B cell (primary cell): ENCODE measurements at regions of chr2 and their contacts with region 1.

Region 1: GRCh38 chr2:213251618-213252017 is 32.6 kb upstream of the SPAG16 start:
- DNase-seq: peak; percentile 71
- ATAC-seq: peak; percentile 72
- H3K4me3 ChIP-seq: no peak overlapping the region
- H3K4me3 Mint-ChIP-seq: no peak overlapping the region
- H3K27ac ChIP-seq: no peak overlapping the region
- H3K27ac Mint-ChIP-seq: no peak overlapping the region
- H3K4me1 ChIP-seq: no peaks in the 10 kb centered on the region
- H3K4me1 Mint-ChIP-seq: no peaks in the 10 kb centered on the region
- H3K27me3 ChIP-seq: no peaks in the 10 kb centered on the region
- H3K27me3 Mint-ChIP-seq: peaks cover 9% of the 10 kb centered on the region
- CTCF ChIP-seq: peak; percentile 92

Region 2: GRCh38 chr2:212711856-212712255 is 539.8 kb before region 1 on chr2:
- CTCF ChIA-PET with region 1: no interaction called
- POLR2A ChIA-PET with region 1: no interaction called
- intact Hi-C with region 1: no loop called
- DNase-seq: no peak
- ATAC-seq: no peak
- H3K4me3 ChIP-seq: no peak overlapping the region
- H3K4me3 Mint-ChIP-seq: no peak overlapping the region
- H3K27ac ChIP-seq: no peak overlapping the region
- H3K27ac Mint-ChIP-seq: no peak overlapping the region
- H3K4me1 ChIP-seq: no peaks in the 10 kb centered on the region
- H3K4me1 Mint-ChIP-seq: no peaks in the 10 kb centered on the region
- H3K27me3 ChIP-seq: no peaks in the 10 kb centered on the region
- H3K27me3 Mint-ChIP-seq: peaks cover 7% of the 10 kb centered on the region
- CTCF ChIP-seq: no peak

Region 3: GRCh38 chr2:212777020-212777491 is 474.6 kb before region 1 on chr2:
- CTCF ChIA-PET with region 1: interaction called, 6 read pairs
- POLR2A ChIA-PET with region 1: no interaction called
- intact Hi-C with region 1: loop called (anchors 5 kb)
- DNase-seq: peak; percentile 52
- ATAC-seq: peak; percentile 54
- H3K4me3 ChIP-seq: no peak overlapping the region
- H3K4me3 Mint-ChIP-seq: no peak overlapping the region
- H3K27ac ChIP-seq: no peak overlapping the region
- H3K27ac Mint-ChIP-seq: no peak overlapping the region
- H3K4me1 ChIP-seq: no peaks in the 10 kb centered on the region
- H3K4me1 Mint-ChIP-seq: no peaks in the 10 kb centered on the region
- H3K27me3 ChIP-seq: no peaks in the 10 kb centered on the region
- H3K27me3 Mint-ChIP-seq: peaks cover 3% of the 10 kb centered on the region
- CTCF ChIP-seq: peak; percentile 84

Region 4: DNA sequence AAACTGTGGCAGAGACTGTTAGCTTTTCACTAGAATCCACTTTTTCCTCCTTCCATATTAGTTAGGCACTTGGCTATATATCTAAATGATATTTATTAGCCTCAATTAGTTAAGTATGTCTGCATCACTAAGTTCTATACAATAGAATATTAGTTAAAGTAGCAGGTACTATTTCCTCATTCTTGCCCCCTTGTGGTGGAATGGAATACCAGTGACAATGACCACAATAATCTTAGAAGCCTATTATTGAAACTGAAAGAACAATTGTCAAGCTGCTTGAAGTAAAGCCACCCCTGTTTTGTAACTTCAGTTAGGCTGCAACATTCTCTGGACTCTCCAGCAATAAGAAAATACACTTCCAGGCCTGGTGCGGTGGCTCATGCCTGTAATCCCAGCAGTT is 682.9 kb after region 1 on chr2:
- CTCF ChIA-PET with region 1: interaction called, 47 read pairs
- POLR2A ChIA-PET with region 1: no interaction called
- intact Hi-C with region 1: no loop called
- DNase-seq: peak; percentile 39
- ATAC-seq: peak; percentile 47
- H3K4me3 ChIP-seq: no peak overlapping the region
- H3K4me3 Mint-ChIP-seq: no peak overlapping the region
- H3K27ac ChIP-seq: no peak overlapping the region
- H3K27ac Mint-ChIP-seq: no peak overlapping the region
- H3K4me1 ChIP-seq: no peaks in the 10 kb centered on the region
- H3K4me1 Mint-ChIP-seq: no peaks in the 10 kb centered on the region
- H3K27me3 ChIP-seq: peaks cover 0 to 3% (median 0%) of the 10 kb centered on the region in 4 experiments
- H3K27me3 Mint-ChIP-seq: peaks cover 7% of the 10 kb centered on the region
- CTCF ChIP-seq: peak; percentile 57

Region 5: DNA sequence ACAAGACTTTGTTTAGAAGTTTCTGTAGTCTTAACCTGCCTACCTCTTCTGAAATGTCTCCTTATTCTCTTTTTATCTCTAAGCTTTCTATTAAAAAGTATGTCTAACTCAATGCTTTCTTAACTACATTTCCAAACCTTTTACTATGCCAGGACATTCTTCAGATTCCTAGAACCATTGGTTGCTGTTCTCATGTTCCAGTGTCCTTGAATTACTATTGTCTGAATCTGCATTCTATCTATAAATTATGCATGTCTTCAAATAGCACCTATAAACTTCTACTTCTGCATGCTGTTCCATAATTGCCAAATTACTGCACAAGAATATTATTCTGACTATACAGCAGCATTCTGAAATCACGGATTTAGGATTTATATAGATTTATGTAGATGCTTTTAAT is 993.2 kb after region 1 on chr2:
- CTCF ChIA-PET with region 1: no interaction called
- POLR2A ChIA-PET with region 1: no interaction called
- intact Hi-C with region 1: no loop called
- DNase-seq: no peak
- ATAC-seq: no peak
- H3K4me3 ChIP-seq: no peak overlapping the region
- H3K4me3 Mint-ChIP-seq: no peak overlapping the region
- H3K27ac ChIP-seq: no peak overlapping the region
- H3K27ac Mint-ChIP-seq: no peak overlapping the region
- H3K4me1 ChIP-seq: no peaks in the 10 kb centered on the region
- H3K4me1 Mint-ChIP-seq: no peaks in the 10 kb centered on the region
- H3K27me3 ChIP-seq: no peaks in the 10 kb centered on the region
- H3K27me3 Mint-ChIP-seq: no peaks in the 10 kb centered on the region
- CTCF ChIP-seq: no peak

Region 6: GRCh38 chr2:214587442-214587841 is 1335.8 kb after region 1 on chr2:
- CTCF ChIA-PET with region 1: no interaction called
- POLR2A ChIA-PET with region 1: no interaction called
- intact Hi-C with region 1: loop called (anchors 5 kb)
- DNase-seq: no peak
- ATAC-seq: no peak
- H3K4me3 ChIP-seq: no peak overlapping the region
- H3K4me3 Mint-ChIP-seq: no peak overlapping the region
- H3K27ac ChIP-seq: no peak overlapping the region
- H3K27ac Mint-ChIP-seq: no peak overlapping the region
- H3K4me1 ChIP-seq: no peaks in the 10 kb centered on the region
- H3K4me1 Mint-ChIP-seq: no peaks in the 10 kb centered on the region
- H3K27me3 ChIP-seq: no peaks in the 10 kb centered on the region
- H3K27me3 Mint-ChIP-seq: peaks cover 6% of the 10 kb centered on the region
- CTCF ChIP-seq: no peak

Region 7: DNA sequence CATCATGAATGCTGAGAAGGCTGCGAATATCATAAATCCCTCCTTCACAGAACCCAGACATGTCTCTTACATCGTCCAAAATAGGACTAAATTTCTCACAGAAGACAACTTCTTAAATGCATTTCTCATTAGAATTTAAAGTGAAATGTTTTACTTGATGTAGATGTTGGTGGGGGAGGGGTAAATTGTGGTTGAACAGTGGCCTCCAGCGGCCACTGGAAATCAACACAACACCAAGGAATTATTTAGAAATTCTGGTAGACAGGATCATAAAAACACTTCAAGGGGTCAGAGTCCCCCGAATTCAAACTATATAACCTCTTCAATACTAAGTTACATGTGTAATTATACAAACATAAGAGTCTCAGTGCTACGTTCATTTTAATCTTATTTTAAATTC is 1750.9 kb after region 1 on chr2:
- CTCF ChIA-PET with region 1: no interaction called
- POLR2A ChIA-PET with region 1: no interaction called
- intact Hi-C with region 1: loop called (anchors 10 kb)
- DNase-seq: peak; percentile 17
- ATAC-seq: no peak
- H3K4me3 ChIP-seq: no peak overlapping the region
- H3K4me3 Mint-ChIP-seq: no peak overlapping the region
- H3K27ac ChIP-seq: no peak overlapping the region
- H3K27ac Mint-ChIP-seq: no peak overlapping the region
- H3K4me1 ChIP-seq: no peaks in the 10 kb centered on the region
- H3K4me1 Mint-ChIP-seq: no peaks in the 10 kb centered on the region
- H3K27me3 ChIP-seq: no peaks in the 10 kb centered on the region
- H3K27me3 Mint-ChIP-seq: peaks cover 3% of the 10 kb centered on the region
- CTCF ChIP-seq: no peak